ENCODE measurements at regions of chr16 and their contacts with region 1.

Region 1: GRCh38 chr16:46929378-46930332 is 43.8 kb downstream of the DNAJA2 start:
- DNase-seq: peak; percentile 77
- H3K4me3 Mint-ChIP-seq: no peak overlapping the region
- H3K27ac Mint-ChIP-seq: no peak overlapping the region
- H3K4me1 Mint-ChIP-seq: no peaks in the 10 kb centered on the region
- H3K27me3 Mint-ChIP-seq: no peaks in the 10 kb centered on the region

Region 2: DNA sequence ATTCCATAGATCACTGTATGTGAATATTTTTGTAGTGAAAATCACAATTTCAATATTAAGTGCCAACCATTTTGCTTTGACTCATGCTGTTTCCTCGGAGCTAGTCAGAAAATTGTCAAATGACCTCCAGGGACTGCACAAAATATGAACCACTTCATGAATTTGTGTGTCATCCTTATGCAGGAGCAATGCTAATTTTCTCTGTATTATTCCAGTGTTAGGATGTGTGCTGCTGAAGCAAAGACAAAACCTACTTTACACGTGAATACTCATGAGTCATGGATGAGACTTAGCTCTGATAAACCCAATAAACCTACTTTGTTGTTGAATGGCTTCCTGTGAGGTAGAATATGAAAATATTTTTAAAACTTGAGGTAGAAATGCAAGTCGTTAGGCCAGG is 373.7 kb before region 1 on chr16:
- CTCF ChIA-PET with region 1: interaction called, 3 read pairs
- intact Hi-C with region 1: loop called (anchors 1 kb)
- DNase-seq: no peak
- H3K4me3 Mint-ChIP-seq: no peak overlapping the region
- H3K27ac Mint-ChIP-seq: no peak overlapping the region
- H3K4me1 Mint-ChIP-seq: no peaks in the 10 kb centered on the region
- H3K27me3 Mint-ChIP-seq: peaks cover 16% of the 10 kb centered on the region

Region 3: GRCh38 chr16:46673320-46674013 is 256.2 kb before region 1 on chr16:
- CTCF ChIA-PET with region 1: interaction called, 13 read pairs
- intact Hi-C with region 1: loop called (anchors 1 kb)
- DNase-seq: peak; percentile 66
- H3K4me3 Mint-ChIP-seq: no peak overlapping the region
- H3K27ac Mint-ChIP-seq: no peak overlapping the region
- H3K4me1 Mint-ChIP-seq: no peaks in the 10 kb centered on the region
- H3K27me3 Mint-ChIP-seq: no peaks in the 10 kb centered on the region

Region 4: GRCh38 chr16:46853713-46854443 is 75.8 kb before region 1 on chr16:
- CTCF ChIA-PET with region 1: interaction called, 14 read pairs
- intact Hi-C with region 1: loop called (anchors 1 kb)
- DNase-seq: peak; percentile 81
- H3K4me3 Mint-ChIP-seq: no peak overlapping the region
- H3K27ac Mint-ChIP-seq: no peak overlapping the region
- H3K4me1 Mint-ChIP-seq: no peaks in the 10 kb centered on the region
- H3K27me3 Mint-ChIP-seq: no peaks in the 10 kb centered on the region

Region 5: GRCh38 chr16:46883690-46884512 is 45.8 kb before region 1 on chr16 and contains the start of gene GPT2:
- CTCF ChIA-PET with region 1: interaction called, 8 read pairs
- intact Hi-C with region 1: loop called (anchors 1 kb)
- DNase-seq: peak; percentile 80
- H3K4me3 Mint-ChIP-seq: peak within 1 kb of the TSS; percentile 78
- H3K27ac Mint-ChIP-seq: peak within 1 kb of the TSS; percentile 68
- H3K4me1 Mint-ChIP-seq: peaks cover 9% of the 10 kb centered on the region
- H3K27me3 Mint-ChIP-seq: peaks cover 19% of the 10 kb centered on the region
- total RNA-seq, gene GPT2: 15.5 to 18.6 TPM

Region 6: DNA sequence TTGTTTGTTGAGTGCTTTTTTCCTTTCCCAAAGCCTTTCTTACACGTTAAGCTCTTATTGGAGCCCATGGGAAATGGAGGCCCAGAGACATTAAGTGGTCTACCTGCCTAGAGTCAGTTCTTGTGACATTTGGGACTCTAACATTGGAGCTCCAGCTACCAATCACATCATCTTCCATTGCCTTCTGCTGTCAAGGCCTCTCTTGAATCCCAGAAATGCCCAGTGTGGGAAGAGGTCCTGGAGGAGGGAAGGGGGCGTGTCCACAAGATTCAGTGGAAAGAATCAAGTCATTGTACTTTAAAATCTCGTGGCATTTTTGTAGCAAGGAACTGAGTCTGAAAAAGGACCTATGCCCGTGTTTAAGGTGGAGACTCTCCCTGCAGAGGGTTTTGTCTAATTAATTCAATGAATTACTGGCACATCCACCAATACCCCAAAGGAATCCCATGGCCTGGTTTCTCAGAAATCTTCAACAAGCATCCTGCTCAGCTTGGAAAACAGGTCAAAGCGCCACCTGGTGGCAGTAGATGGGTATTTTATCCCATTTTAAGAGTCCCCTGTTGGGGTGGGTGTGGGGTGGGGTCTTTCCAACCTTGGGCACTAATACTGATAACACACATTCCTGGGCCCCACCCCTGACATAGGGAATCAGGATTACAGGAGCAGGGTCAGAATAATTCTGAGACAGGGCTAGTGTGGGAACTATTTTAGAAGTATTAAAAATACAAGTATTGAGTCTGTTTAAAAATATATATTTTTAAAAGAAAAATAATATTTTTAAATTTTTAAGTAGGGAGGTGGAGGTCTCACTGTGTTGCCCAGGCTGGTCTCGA is 20.9 kb before region 1 on chr16:
- CTCF ChIA-PET with region 1: interaction called, 15 read pairs
- intact Hi-C with region 1: no loop called
- DNase-seq: peak; percentile 72
- H3K4me3 Mint-ChIP-seq: no peak overlapping the region
- H3K27ac Mint-ChIP-seq: no peak overlapping the region
- H3K4me1 Mint-ChIP-seq: peaks cover 10% of the 10 kb centered on the region
- H3K27me3 Mint-ChIP-seq: no peaks in the 10 kb centered on the region